ENCODE measurements at regions of chr7 and their contacts with region 1.

Region 1: DNA sequence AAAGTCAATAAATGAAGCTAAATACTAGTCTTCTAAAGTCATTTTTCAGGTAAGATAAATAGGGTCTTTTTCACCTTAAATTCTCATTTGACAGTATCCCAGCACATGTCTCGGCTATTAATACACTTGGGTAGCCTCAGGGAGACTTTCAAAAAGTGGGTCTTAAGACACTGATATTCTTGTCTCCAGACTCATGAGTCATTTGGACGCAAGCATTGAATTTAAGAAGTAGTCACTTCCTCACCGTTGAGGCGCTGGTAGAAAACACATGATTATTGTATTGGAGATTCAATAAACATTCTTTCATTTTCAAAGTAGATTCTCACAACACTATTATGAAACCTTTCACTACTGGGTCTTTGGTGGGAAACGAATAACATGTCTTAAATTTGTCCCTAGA is 108.9 kb upstream of the SP8 start:
- DNase-seq: no peak
- H3K4me3 ChIP-seq: no peak overlapping the region
- H3K27ac ChIP-seq: no peak overlapping the region
- H3K4me1 ChIP-seq: 0 out of 2 replicates have a peak, but pooled peaks cover 9% of the 10 kb centered on the region
- H3K27me3 ChIP-seq: no peaks in the 10 kb centered on the region
- CTCF ChIP-seq: no peak

Region 2: GRCh38 chr7:20475756-20476155 is 419.8 kb before region 1 on chr7:
- CTCF ChIA-PET with region 1: no interaction called
- POLR2A ChIA-PET with region 1: interaction called, 12 read pairs
- intact Hi-C with region 1: no loop called
- DNase-seq: no peak
- H3K4me3 ChIP-seq: no peak overlapping the region
- H3K27ac ChIP-seq: no peak overlapping the region
- H3K4me1 ChIP-seq: no peaks in the 10 kb centered on the region
- H3K27me3 ChIP-seq: no peaks in the 10 kb centered on the region
- CTCF ChIP-seq: no peak

Region 3: GRCh38 chr7:20722941-20723340 is 172.6 kb before region 1 on chr7:
- CTCF ChIA-PET with region 1: interaction called, 12 read pairs
- POLR2A ChIA-PET with region 1: no interaction called
- intact Hi-C with region 1: no loop called
- DNase-seq: no peak
- H3K4me3 ChIP-seq: no peak overlapping the region
- H3K27ac ChIP-seq: no peak overlapping the region
- H3K4me1 ChIP-seq: no peaks in the 10 kb centered on the region
- H3K27me3 ChIP-seq: no peaks in the 10 kb centered on the region
- CTCF ChIP-seq: no peak

Region 4: DNA sequence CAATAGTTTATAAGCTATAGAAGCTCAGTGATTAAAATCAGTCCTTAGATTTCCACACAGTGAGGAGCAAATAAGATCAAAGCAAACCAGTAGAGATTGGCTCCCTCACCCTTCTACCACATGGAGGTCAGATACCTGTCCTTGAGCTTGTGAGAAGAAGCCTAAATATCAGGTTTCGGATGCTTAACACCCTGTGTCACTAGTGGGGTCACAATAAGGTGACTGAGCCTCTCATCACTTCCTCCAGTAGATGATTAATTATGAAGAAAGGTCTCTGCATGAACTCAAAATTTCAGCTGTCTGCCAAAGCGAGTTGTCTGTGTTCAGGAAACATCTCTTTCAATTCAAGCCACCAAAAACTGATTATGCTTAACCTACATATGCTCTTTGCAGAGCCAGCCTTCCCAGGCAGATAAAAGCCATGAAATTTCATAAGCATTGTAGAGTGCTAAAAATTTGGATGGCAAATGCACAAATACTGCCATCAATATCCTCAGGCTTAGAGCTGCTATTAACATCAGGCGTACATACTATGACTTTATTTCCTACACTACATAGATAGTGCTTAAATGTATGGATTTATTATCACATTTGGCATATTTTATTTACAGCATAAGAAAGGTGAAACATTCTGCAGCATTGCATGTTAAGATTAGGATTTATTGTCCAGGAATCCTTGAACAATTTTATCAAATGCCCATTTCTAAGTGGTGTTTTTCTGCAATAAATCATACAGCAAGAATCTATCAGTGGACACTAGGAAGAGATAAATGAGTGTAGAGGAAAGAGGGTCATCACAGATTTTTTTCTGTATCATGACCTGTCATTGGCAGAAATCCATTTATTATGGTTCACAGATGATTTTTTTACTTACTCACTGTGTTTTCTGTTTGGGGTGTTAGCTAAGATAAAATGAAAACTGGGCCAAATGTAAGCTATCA is 176.3 kb after region 1 on chr7:
- CTCF ChIA-PET with region 1: no interaction called
- POLR2A ChIA-PET with region 1: no interaction called
- intact Hi-C with region 1: no loop called
- DNase-seq: peak in 1 of 2 experiments; percentile 51
- H3K4me3 ChIP-seq: no peak overlapping the region
- H3K27ac ChIP-seq: no peak overlapping the region
- H3K4me1 ChIP-seq: peaks cover 27% of the 10 kb centered on the region
- H3K27me3 ChIP-seq: no peaks in the 10 kb centered on the region
- CTCF ChIP-seq: no peak

Measured in PC-9 (cell line).